ENCODE measurements at regions of chr1 and their contacts with region 1.

Region 1: GRCh38 chr1:225777583-225778336 is at the start of gene SRP9:
- DNase-seq: peak; percentile 99
- total RNA-seq, gene SRP9: 182 TPM

Region 2: DNA sequence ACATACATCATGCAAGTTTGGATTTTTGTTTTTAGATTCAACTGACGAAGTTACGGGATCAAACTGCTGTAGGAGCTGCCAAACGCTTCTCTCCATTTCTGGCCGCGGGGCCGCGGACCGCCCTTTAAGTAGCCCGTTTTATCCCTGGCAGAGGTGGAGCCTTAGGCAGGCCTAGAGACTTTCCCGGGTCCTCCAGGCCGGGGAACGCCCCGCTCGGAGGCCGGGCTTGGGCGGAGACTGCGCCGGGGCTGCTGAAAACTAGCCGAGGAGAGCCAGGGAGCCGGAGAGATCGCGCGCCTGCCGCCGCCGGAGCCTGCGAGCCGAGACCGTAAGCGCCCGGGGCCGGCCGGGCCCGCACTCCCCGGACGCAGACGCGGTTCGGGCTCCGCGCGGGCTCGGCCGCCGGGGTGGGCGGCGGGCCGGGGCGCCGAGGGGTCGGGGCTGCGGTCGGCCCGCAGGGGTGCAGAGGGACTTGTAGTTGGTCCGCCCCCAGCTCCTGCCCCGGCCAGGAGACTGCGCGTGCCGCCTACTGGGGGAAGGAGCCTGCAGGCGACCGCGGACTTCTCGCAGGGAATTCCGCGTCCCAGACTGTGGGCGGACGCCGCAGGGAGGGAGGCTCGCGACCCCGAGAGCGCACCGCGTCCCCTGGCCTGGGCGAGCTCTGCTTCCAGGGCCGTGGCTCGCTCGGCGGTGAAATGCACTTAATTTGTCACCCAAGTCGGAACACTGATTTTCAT is 32.2 kb after region 1 on chr1 and contains the start of gene EPHX1:
- intact Hi-C with region 1: loop called (anchors 1 kb)
- DNase-seq: peak; percentile 95
- total RNA-seq, gene EPHX1: 39.2 TPM

Region 3: GRCh38 chr1:225845571-225846259 is 68.0 kb after region 1 on chr1:
- intact Hi-C with region 1: loop called (anchors 2 kb)
- DNase-seq: peak; percentile 84

Region 4: DNA sequence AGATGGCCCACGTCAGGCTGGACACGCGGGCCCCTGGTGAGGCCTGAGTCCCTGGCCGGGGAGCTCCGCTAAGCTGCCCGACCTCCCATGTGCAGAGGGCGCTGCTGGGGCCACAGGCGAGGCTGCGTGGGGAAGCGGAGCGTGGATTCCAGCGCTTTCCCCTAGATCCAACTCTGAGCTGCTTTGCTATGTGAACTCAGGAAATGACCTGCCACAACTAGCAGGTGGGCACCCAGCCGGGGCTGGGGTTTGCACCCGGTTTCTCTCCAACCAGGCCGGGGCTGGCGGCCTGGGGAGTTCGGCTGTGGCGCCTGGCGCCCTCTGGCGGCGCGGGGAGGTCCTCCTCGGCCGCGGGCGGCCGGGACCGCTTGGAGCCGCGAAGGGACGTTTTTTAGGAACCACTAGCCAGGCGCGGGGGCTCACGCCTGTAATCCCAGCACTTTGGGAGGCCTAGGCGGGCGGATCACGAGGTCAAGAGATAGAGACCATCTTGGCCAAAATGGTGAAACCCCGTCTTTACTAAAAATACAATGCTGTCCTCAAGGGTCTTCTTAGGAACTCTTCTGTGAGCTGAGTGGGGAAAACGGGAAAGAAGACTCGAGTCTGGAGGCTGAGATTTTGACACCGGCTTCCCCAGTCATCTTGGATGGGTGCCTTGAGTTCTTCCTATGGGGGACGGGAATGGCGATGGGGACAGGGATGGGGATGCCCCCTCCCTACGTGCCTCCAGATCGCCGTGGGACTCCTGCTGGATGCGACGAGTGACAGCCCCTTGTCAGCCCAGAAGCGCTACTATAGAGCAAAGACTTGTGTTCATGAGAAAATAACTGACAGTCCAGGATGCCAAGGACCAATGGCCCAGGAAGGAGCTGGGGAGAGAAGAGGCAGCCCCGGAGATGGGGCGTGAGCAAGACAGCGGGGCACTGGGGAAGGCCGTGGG is 133.7 kb after region 1 on chr1:
- intact Hi-C with region 1: loop called (anchors 5 kb)
- DNase-seq: peak; percentile 81